ENCODE measurements at regions of chr18 and their contacts with region 1.

Region 1: DNA sequence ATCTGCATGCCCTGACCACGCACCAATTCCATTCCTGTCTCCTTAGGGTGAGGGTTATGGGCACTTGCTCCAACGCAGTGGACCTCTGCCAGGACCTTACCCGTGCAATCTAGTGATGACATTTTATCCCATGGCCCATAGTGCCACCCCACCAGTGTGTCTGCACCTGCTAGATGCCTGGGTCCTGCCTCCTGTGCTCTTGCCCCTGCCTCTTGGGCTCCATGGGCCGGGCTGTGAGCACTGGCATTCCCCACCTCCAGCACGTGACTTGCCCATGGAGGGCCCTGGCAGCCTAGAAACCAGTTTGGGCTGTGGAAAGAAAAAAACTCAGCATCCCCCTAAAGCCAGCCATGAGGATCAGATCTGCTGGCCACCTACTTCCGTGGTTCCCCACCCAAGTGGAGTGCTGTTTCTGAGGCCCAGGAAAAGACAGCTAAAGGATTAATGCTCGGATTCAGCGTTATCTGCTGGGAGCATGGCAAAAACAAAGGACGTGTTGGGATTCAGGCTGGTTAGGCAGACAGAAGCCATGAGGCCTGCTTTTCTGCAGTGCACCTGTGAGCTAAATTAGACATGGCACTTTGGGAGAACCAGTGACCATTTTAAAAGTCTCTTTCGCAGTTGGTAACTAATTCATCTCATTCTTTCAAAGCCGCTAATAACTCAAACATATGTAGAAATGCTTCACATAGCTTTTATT is 129.2 kb downstream of the ALPK2 start:
- DNase-seq: no peak
- ATAC-seq: no peak
- H3K4me3 ChIP-seq: no peak overlapping the region
- H3K27ac ChIP-seq: no peak overlapping the region
- H3K4me1 ChIP-seq: no peaks in the 10 kb centered on the region
- H3K27me3 ChIP-seq: no peaks in the 10 kb centered on the region
- CTCF ChIP-seq: no peak

Region 2: GRCh38 chr18:58416014-58416703 is 83.5 kb before region 1 on chr18:
- CTCF ChIA-PET with region 1: interaction called, 14 read pairs
- POLR2A ChIA-PET with region 1: no interaction called
- intact Hi-C with region 1: no loop called
- DNase-seq: no peak
- ATAC-seq: no peak
- H3K4me3 ChIP-seq: no peak overlapping the region
- H3K27ac ChIP-seq: no peak overlapping the region
- H3K4me1 ChIP-seq: peaks cover 23% of the 10 kb centered on the region
- H3K27me3 ChIP-seq: no peaks in the 10 kb centered on the region
- CTCF ChIP-seq: no peak

Region 3: GRCh38 chr18:58596265-58596681 is 96.6 kb after region 1 on chr18:
- CTCF ChIA-PET with region 1: interaction called, 12 read pairs
- POLR2A ChIA-PET with region 1: no interaction called
- intact Hi-C with region 1: no loop called
- DNase-seq: no peak
- ATAC-seq: no peak
- H3K4me3 ChIP-seq: no peak overlapping the region
- H3K27ac ChIP-seq: no peak overlapping the region
- H3K4me1 ChIP-seq: peaks cover 8% of the 10 kb centered on the region
- H3K27me3 ChIP-seq: no peaks in the 10 kb centered on the region
- CTCF ChIP-seq: no peak